GM10248 (cell line): ENCODE measurements at regions of chr9 and their contacts with region 1.

Region 1: DNA sequence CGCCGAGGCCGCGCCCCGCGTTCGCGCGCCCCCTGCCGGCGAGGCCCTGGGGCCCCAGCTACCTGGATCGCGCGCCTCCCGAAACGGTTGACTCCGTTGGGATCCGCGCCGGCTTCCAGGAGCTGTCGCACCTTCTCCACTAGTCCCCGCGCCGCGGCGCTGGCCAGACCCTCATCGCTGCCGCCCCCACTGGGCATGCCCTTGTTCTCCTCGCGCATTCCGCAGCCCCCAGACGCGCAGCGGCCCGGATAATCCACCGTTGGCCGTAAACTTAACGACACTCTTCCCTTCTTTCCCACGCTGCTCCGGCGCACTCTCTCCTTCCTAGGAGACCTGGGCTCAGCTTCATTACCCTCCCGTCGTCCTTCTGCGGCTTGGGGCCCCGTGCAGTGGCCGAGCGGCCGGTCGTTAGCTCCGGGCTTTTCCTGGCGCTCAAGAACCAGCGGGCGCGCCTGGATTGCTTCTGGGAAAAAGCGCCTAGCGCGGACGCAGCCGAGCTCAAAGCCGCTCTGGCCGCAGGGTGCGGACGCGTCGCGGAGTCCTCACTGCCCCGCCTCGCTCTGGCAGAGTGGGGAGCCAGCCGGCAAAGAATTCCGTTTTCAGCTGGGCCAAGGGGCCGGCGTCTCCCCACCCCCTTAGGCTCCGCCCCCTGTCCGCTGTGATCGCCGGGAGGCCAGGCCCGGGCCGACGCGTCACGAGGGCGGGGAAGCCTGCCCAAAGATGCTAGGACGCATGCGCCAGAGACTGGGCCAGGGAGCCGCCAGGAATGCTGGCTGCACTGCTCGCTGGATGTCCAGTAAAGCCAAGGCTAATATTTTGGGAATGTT is at the start of gene CDKN2B:
- DNase-seq: peak; percentile 91
- CTCF ChIP-seq: peak; percentile 91

Region 2: DNA sequence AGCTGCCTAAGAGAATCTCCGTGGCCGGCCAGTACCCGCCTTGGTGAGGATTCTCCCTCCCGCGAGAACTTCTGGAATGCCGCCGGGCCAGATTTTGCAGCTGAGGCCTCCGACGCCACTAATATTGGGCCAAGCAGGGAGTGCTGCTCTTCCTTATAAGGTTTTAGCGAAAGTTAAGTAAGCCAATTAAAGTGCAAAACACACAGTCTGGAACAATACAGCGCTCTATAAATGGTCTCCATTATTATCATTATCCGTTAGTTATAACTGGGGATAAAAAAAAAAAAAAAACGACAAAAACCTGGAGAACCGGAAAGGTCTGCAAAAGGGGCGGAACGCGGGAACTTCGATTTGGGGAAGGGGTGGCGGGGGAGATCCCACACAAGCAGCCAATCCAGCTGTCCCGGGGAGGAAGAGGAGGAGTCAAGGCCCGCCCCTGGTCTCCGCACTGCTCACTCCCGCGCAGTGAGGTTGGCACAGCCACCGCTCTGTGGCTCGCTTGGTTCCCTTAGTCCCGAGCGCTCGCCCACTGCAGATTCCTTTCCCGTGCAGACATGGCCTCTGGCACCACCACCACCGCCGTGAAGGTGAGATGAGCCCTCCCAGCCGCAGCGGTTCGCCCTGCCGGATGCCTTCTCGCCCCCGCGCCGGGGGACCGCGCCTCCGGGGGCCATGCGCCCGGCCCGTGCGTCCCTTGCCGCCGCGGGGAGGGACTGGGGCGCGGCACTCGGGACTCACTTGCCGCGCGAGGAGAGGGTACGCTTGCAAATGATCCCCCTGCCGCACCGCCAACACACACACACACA is 206.6 kb before region 1 on chr9 and contains the start of gene MTAP:
- CTCF ChIA-PET with region 1: interaction called, 11 read pairs
- POLR2A ChIA-PET with region 1: no interaction called
- DNase-seq: peak; percentile 87
- CTCF ChIP-seq: no peak

Region 3: GRCh38 chr9:21968331-21969010 is 40.5 kb before region 1 on chr9:
- CTCF ChIA-PET with region 1: interaction called, 27 read pairs
- POLR2A ChIA-PET with region 1: no interaction called
- DNase-seq: no peak
- CTCF ChIP-seq: no peak

Region 4: GRCh38 chr9:21995177-21996086 is 13.5 kb before region 1 on chr9:
- CTCF ChIA-PET with region 1: interaction called, 95 read pairs
- POLR2A ChIA-PET with region 1: interaction called, 3 read pairs
- DNase-seq: peak; percentile 88
- CTCF ChIP-seq: peak; percentile 37

Region 5: DNA sequence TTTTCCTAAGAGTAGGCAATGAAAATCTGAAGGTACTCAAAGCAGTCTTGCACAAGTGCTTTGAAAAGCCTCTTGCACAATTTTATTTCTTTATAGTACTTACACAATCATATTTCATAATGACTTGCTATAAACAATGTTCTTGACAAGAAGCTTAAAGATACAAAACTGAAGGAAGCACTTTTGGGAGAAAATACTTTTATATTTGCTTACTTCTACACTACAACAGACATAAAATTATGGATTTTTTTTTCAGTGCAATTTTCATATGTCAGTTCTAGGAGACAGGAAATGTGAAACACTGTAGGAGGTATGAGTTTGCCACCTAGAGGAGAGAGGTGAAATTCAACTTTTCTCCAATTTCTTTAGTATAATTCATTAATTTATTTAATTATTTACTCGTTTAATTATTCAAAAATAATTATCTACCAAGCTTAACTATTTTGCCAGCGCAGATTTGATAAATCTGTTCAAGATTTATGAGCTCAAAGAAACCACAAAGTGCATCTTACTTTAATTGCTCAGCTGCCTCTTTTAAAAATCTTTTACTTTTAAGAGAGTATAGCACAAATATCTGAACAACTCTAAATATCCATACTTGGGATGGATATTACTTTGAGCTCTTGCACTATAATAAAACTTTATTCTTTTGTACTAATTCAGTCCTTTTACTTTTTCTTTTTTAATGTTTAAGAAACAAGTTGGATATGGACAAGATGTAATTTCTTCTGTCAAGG is 29.2 kb after region 1 on chr9:
- CTCF ChIA-PET with region 1: interaction called, 27 read pairs
- POLR2A ChIA-PET with region 1: no interaction called
- DNase-seq: no peak
- CTCF ChIP-seq: no peak

Region 6: DNA sequence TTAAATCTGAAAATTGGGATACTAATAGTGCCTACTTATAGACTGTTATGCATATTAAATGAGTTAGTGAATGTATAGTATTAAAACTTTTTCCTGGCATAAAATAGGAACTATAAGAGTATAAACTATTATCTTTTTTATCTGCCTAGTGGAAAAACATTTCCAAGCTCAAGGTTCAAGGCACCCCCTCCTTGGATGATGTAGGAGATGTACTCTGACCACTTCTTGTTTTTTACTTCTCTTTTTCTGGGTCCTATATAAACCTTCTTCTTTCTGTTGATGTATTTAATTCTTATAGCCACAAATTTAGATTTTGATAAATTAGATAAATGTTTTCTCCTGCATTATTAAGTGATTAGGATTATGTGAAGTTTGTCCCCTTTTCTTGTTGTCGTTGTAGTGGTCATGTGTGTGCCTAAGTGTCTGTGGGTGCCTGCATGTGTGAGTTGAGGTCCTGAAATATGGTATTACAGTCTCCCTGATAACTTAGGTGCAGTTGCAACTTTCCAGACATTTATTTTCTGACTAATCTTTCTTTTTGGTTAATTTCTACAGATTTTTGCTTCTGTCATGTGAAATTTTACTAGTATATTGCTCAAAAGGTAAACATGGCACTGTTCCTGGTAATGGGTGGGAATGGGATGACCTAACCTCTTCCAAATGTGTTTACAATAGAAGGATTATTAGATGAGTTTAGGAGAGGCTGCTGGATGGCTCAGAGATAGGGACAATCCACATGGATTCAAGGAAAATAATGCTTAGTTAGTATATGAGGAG is 161.0 kb after region 1 on chr9:
- CTCF ChIA-PET with region 1: no interaction called
- POLR2A ChIA-PET with region 1: no interaction called
- DNase-seq: no peak
- CTCF ChIP-seq: no peak

Region 7: GRCh38 chr9:22238809-22239684 is 230.1 kb after region 1 on chr9:
- CTCF ChIA-PET with region 1: interaction called, 11 read pairs
- POLR2A ChIA-PET with region 1: no interaction called
- DNase-seq: peak; percentile 11
- CTCF ChIP-seq: peak; percentile 32

Region 8: DNA sequence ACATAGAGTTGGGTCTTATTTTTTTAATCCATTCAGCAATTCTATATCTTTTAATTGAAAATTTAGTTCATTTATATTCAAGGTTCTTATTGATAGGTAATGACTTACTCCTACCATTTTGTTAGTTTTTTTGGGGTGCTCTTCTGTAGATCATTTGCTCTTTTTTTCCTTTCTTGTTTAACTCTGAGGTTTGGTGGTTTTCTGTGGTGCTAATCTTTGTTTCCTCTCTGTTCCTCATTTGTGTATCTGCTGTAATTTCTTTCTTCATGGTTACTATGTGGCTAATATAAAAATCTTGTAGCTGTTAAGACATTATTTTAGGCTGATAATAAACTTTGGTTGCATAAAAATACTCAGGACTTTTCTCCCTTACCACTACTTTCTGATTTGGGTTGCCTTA is 256.1 kb after region 1 on chr9:
- CTCF ChIA-PET with region 1: no interaction called
- POLR2A ChIA-PET with region 1: no interaction called
- DNase-seq: no peak
- CTCF ChIP-seq: no peak